RWPE1 (cell line): ENCODE measurements at regions of chr9 and their contacts with region 1.

Region 1: GRCh38 chr9:16321461-16322119 is 548.9 kb downstream of the BNC2 start:
- DNase-seq: no peak
- H3K27ac ChIP-seq: no peak overlapping the region
- CTCF ChIP-seq: no peak

Region 2: DNA sequence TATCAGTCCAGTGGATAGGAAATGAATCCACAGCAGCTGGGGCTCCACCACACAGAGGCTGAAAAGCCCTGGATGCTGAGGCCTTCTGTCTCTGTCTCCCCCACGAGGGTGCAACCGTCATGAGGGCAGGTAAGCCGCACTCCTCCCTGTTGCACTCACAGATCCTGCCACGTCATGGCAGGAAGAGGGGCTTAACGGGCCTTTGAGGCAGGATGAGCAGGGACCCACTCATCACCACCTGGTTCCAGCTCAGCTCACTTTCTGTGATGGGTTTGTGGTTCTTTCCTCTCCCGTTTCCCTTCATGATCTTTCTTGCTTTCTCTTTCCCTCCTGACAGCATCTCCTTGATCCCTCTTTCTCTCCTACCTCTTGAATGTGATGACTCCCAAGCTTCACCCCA is 193.6 kb before region 1 on chr9:
- CTCF ChIA-PET with region 1: interaction called, 13 read pairs
- POLR2A ChIA-PET with region 1: no interaction called
- DNase-seq: no peak
- H3K27ac ChIP-seq: no peak overlapping the region
- CTCF ChIP-seq: no peak

Region 3: DNA sequence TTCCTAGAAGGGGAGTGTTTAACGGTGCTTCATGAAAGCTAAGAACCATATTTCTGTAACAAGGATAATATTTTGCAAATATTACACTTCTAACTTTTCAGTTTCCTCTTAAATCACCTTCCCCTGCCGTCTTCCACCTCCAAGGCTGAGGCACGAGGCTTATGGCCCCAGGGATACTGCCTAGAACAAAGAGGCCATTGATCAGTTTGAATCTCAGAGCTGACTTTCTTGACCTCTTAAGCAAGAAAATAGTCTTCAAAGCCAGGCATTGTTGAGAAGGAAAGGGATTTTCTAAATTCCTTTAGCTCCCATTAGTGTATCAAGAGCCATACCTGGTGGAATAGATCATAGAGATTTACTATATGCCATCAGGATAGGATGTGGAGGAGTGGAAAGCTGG is 17.3 kb before region 1 on chr9:
- CTCF ChIA-PET with region 1: no interaction called
- POLR2A ChIA-PET with region 1: no interaction called
- DNase-seq: no peak
- H3K27ac ChIP-seq: no peak overlapping the region
- CTCF ChIP-seq: no peak